IMR-90 (cell line): ENCODE measurements at regions of chr17 and their contacts with region 1.

Region 1: GRCh38 chr17:55527540-55528118 is 16.4 kb upstream of the SMIM36 start:
- DNase-seq: peak; percentile 65
- ATAC-seq: peak; percentile 70
- H3K4me3 ChIP-seq: no peak overlapping the region
- H3K27ac ChIP-seq: no peak overlapping the region
- H3K4me1 ChIP-seq: no peaks in the 10 kb centered on the region
- H3K27me3 ChIP-seq: no peaks in the 10 kb centered on the region; the same call in 1 of the 2 replicates
- CTCF ChIP-seq: peak; percentile 75
- POLR2A ChIP-seq: no peak
- RAD21 ChIP-seq: peak; percentile 78

Region 2: GRCh38 chr17:55295411-55296170 is 232.0 kb before region 1 on chr17:
- CTCF ChIA-PET with region 1: no interaction called
- POLR2A ChIA-PET with region 1: no interaction called
- dilution Hi-C with region 1: no loop called
- in situ Hi-C with region 1: no loop called
- intact Hi-C with region 1: no loop called
- DNase-seq: peak; percentile 43
- ATAC-seq: peak; percentile 96
- H3K4me3 ChIP-seq: no peak overlapping the region
- H3K27ac ChIP-seq: no peak overlapping the region
- H3K4me1 ChIP-seq: no peaks in the 10 kb centered on the region
- H3K27me3 ChIP-seq: peaks cover 4% of the 10 kb centered on the region; the same call in 1 of the 2 replicates
- CTCF ChIP-seq: peak; percentile 83
- POLR2A ChIP-seq: no peak
- RAD21 ChIP-seq: peak; percentile 77

Region 3: GRCh38 chr17:55366020-55366481 is 161.6 kb before region 1 on chr17:
- CTCF ChIA-PET with region 1: no interaction called
- POLR2A ChIA-PET with region 1: no interaction called
- dilution Hi-C with region 1: no loop called
- in situ Hi-C with region 1: no loop called
- intact Hi-C with region 1: no loop called
- DNase-seq: no peak
- ATAC-seq: no peak
- H3K4me3 ChIP-seq: no peak overlapping the region
- H3K27ac ChIP-seq: no peak overlapping the region
- H3K4me1 ChIP-seq: no peaks in the 10 kb centered on the region
- H3K27me3 ChIP-seq: peaks cover 3% of the 10 kb centered on the region
- CTCF ChIP-seq: no peak
- POLR2A ChIP-seq: no peak
- RAD21 ChIP-seq: no peak

Region 4: GRCh38 chr17:55500103-55500502 is 27.5 kb before region 1 on chr17:
- CTCF ChIA-PET with region 1: no interaction called
- POLR2A ChIA-PET with region 1: no interaction called
- dilution Hi-C with region 1: no loop called
- in situ Hi-C with region 1: no loop called
- intact Hi-C with region 1: no loop called
- DNase-seq: no peak
- ATAC-seq: no peak
- H3K4me3 ChIP-seq: no peak overlapping the region
- H3K27ac ChIP-seq: no peak overlapping the region
- H3K4me1 ChIP-seq: peaks cover 2% of the 10 kb centered on the region; the same call in 1 of the 2 replicates
- H3K27me3 ChIP-seq: no peaks in the 10 kb centered on the region
- CTCF ChIP-seq: no peak
- POLR2A ChIP-seq: no peak
- RAD21 ChIP-seq: no peak

Region 5: GRCh38 chr17:55641676-55642081 is 114.0 kb after region 1 on chr17:
- CTCF ChIA-PET with region 1: interaction called, 8 read pairs
- POLR2A ChIA-PET with region 1: no interaction called
- dilution Hi-C with region 1: no loop called
- in situ Hi-C with region 1: no loop called
- intact Hi-C with region 1: loop called (anchors 1 kb)
- DNase-seq: peak; percentile 63
- ATAC-seq: peak; percentile 94
- H3K4me3 ChIP-seq: no peak overlapping the region
- H3K27ac ChIP-seq: no peak overlapping the region
- H3K4me1 ChIP-seq: no peaks in the 10 kb centered on the region
- H3K27me3 ChIP-seq: peaks cover 4% of the 10 kb centered on the region
- CTCF ChIP-seq: peak; percentile 54
- POLR2A ChIP-seq: no peak
- RAD21 ChIP-seq: peak; percentile 46

Region 6: DNA sequence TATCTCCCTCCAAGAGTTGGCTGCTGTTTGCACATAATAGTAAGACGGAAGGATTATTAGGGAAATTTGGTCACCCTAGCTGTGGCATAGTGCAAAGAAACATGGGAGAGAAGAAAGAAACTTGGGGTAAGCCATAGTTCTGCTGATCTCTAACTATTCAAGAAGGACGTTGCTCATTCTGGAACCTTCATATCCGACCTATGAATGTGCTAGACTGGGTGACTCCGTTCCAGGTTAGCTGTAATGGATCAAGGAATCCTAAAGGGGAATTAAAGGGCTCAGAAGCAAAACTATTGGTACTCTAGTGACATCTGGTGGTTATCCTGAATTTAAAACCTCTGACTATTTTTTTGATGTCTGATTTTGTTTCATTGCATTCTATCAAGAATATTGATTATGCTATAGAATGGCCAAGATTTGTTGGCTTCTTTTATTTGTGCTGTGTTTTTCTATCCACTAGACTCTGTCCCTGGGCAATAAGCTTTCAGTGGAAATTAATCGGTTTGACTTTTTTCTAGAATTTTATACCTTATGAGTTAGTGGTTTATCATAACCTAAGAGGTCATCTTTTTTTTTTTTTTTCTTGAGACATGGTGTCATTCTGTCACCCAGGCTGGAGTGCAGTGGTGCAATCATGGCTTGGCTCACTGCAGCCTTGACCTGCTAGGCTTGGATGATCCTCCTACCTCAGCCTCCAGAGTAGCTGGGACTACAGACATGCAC is 242.7 kb after region 1 on chr17:
- CTCF ChIA-PET with region 1: interaction called, 6 read pairs
- POLR2A ChIA-PET with region 1: no interaction called
- dilution Hi-C with region 1: no loop called
- in situ Hi-C with region 1: loop called (anchors 5 kb)
- intact Hi-C with region 1: loop called (anchors 1 kb)
- DNase-seq: peak; percentile 72
- ATAC-seq: peak; percentile 63
- H3K4me3 ChIP-seq: no peak overlapping the region
- H3K27ac ChIP-seq: no peak overlapping the region
- H3K4me1 ChIP-seq: peaks cover 8% of the 10 kb centered on the region
- H3K27me3 ChIP-seq: no peaks in the 10 kb centered on the region
- CTCF ChIP-seq: peak; percentile 69
- POLR2A ChIP-seq: no peak
- RAD21 ChIP-seq: peak; percentile 73

Region 7: DNA sequence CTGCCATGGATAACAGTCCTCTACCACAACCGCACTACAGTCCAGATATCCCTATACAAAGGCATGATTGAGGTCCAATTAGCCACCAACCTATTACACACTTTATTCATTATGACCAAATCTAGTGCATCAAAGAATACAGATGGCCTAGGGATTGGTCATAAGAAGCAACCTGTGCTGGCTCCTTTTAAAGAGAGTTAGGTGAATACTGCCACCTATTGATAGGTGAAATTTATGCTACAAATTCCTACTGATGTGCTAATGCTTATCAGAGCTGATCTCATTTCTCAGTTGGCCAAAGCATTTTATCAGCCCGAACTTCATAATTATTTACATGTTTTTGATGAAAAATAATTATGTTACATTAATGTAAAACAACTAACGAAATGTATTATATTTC is 791.9 kb after region 1 on chr17:
- CTCF ChIA-PET with region 1: no interaction called
- POLR2A ChIA-PET with region 1: no interaction called
- dilution Hi-C with region 1: no loop called
- in situ Hi-C with region 1: no loop called
- intact Hi-C with region 1: loop called (anchors 10 kb)
- DNase-seq: peak; percentile 70
- ATAC-seq: peak; percentile 79
- H3K4me3 ChIP-seq: no peak overlapping the region
- H3K27ac ChIP-seq: no peak overlapping the region
- H3K4me1 ChIP-seq: peaks cover 3% of the 10 kb centered on the region
- H3K27me3 ChIP-seq: peaks cover 1% of the 10 kb centered on the region; the same call in 1 of the 2 replicates
- CTCF ChIP-seq: peak; percentile 66
- POLR2A ChIP-seq: no peak
- RAD21 ChIP-seq: peak; percentile 77

Region 8: GRCh38 chr17:56416682-56417351 is 889.2 kb after region 1 on chr17:
- CTCF ChIA-PET with region 1: no interaction called
- POLR2A ChIA-PET with region 1: no interaction called
- dilution Hi-C with region 1: no loop called
- in situ Hi-C with region 1: no loop called
- intact Hi-C with region 1: no loop called
- DNase-seq: no peak
- ATAC-seq: no peak
- H3K4me3 ChIP-seq: no peak overlapping the region
- H3K27ac ChIP-seq: no peak overlapping the region
- H3K4me1 ChIP-seq: no peaks in the 10 kb centered on the region
- H3K27me3 ChIP-seq: no peaks in the 10 kb centered on the region
- CTCF ChIP-seq: no peak
- POLR2A ChIP-seq: no peak
- RAD21 ChIP-seq: no peak